A549 (cell line): ENCODE measurements at regions of chr15 and their contacts with region 1.

Region 1: GRCh38 chr15:40108855-40109735 is at the start of gene BMF:
- DNase-seq: peak; percentile 85 to 96
- ATAC-seq: peak; percentile 83 to 87
- H3K4me3 ChIP-seq: peak within 1 kb of the TSS; percentile 57
- H3K27ac ChIP-seq: peak within 1 kb of the TSS; percentile 59 to 82; a peak in 5 of 6 replicates
- H3K4me1 ChIP-seq: peaks cover 31% of the 10 kb centered on the region
- CTCF ChIP-seq: peak; percentile 40
- EP300 ChIP-seq: no peak
- POLR2A ChIP-seq: no peak
- RAD21 ChIP-seq: peak; percentile 17 to 36; a peak in 2 of 5 replicates
- polyA plus RNA-seq, gene BMF: 1.4 and 2.1 TPM in 2 replicates

Region 2: GRCh38 chr15:40044717-40045571 is 64.2 kb before region 1 on chr15:
- CTCF ChIA-PET with region 1: interaction called, 174 read pairs
- POLR2A ChIA-PET with region 1: interaction called, 5 read pairs
- DNase-seq: peak; percentile 78 to 84
- ATAC-seq: peak; percentile 94 to 98
- H3K4me3 ChIP-seq: peak overlapping the region; percentile 29
- H3K27ac ChIP-seq: peak overlapping the region; percentile 61 to 85
- H3K4me1 ChIP-seq: peaks cover 45% of the 10 kb centered on the region
- CTCF ChIP-seq: peak; percentile 83
- EP300 ChIP-seq: no peak
- POLR2A ChIP-seq: no peak
- RAD21 ChIP-seq: peak; percentile 93 to 97

Region 3: GRCh38 chr15:40064221-40064894 is 44.7 kb before region 1 on chr15:
- CTCF ChIA-PET with region 1: interaction called, 20 read pairs
- POLR2A ChIA-PET with region 1: no interaction called
- DNase-seq: peak in 1 of 2 experiments; percentile 73
- ATAC-seq: peak; percentile 47 to 53; a peak in 4 of 6 replicates
- H3K4me3 ChIP-seq: no peak overlapping the region
- H3K27ac ChIP-seq: peak overlapping the region; percentile 70 to 83
- H3K4me1 ChIP-seq: peaks cover 56% of the 10 kb centered on the region
- CTCF ChIP-seq: no peak
- EP300 ChIP-seq: peak; percentile 38 to 40; a peak in 2 of 5 replicates
- POLR2A ChIP-seq: no peak
- RAD21 ChIP-seq: no peak

Region 4: GRCh38 chr15:40081691-40082194 is 27.4 kb before region 1 on chr15:
- CTCF ChIA-PET with region 1: interaction called, 28 read pairs
- POLR2A ChIA-PET with region 1: no interaction called
- DNase-seq: peak in 1 of 2 experiments; percentile 32
- ATAC-seq: peak; percentile 83 to 91
- H3K4me3 ChIP-seq: no peak overlapping the region
- H3K27ac ChIP-seq: peak overlapping the region; percentile 50 to 77; a peak in 5 of 6 replicates
- H3K4me1 ChIP-seq: peaks cover 12% of the 10 kb centered on the region
- CTCF ChIP-seq: no peak
- EP300 ChIP-seq: no peak
- POLR2A ChIP-seq: no peak
- RAD21 ChIP-seq: no peak

Region 5: GRCh38 chr15:40098489-40099261 is 10.4 kb before region 1 on chr15:
- CTCF ChIA-PET with region 1: interaction called, 24 read pairs
- POLR2A ChIA-PET with region 1: interaction called, 4 read pairs
- DNase-seq: peak; percentile 83 to 90
- ATAC-seq: peak; percentile 97
- H3K4me3 ChIP-seq: no peak overlapping the region
- H3K27ac ChIP-seq: peak overlapping the region; percentile 68 to 81
- H3K4me1 ChIP-seq: peaks cover 52% of the 10 kb centered on the region
- CTCF ChIP-seq: no peak
- EP300 ChIP-seq: peak; percentile 37 to 43; a peak in 2 of 5 replicates
- POLR2A ChIP-seq: no peak
- RAD21 ChIP-seq: no peak; a peak in 2 of 5 replicates

Region 6: DNA sequence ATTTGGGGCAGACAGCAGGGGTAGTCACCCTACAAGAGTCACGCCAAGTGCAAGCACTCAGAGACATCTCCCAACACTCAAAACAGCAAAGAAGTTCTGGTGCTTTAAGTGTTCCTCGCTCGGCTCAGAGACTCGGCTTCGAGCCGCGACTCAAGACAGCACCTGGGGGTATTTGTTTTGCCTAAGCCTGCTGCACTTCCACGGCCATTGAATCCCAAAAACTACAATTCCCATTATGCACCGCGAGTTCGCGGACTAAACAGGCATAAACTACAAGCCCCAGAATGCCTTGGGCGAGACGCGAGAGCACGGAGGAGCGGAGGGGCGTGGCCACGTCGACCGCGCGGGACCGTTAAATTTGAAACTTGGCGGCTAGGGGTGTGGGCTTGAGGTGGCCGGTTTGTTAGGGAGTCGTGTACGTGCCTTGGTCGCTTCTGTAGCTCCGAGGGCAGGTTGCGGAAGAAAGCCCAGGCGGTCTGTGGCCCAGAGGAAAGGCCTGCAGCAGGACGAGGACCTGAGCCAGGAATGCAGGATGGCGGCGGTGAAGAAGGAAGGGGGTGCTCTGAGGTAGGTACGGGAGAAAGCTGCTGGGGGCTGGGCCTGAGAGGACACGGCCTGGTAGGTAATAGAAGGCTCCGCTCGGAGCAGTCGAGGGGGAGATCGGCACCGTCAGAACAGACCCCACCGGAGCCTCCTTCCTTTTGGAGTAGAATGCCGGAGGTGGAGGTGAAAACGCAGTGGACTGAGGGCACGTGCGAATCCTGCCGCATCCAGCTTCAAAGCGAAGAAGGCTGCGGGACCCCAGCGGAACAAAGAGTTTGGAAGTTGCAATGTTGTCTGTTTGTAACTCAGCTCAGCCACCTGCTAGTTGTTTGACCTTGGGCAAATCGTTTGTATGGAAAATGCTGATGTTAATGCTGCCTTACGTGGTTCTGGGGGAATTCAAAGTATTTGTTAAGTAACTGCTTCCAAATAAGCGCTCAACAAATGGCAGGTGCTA is 51.9 kb after region 1 on chr15 and contains the start of gene BUB1B:
- CTCF ChIA-PET with region 1: interaction called, 12 read pairs
- POLR2A ChIA-PET with region 1: no interaction called
- DNase-seq: peak; percentile 89 to 90
- ATAC-seq: peak; percentile 97
- H3K4me3 ChIP-seq: peak within 1 kb of the TSS; percentile 69
- H3K27ac ChIP-seq: peak within 1 kb of the TSS; percentile 70 to 92
- H3K4me1 ChIP-seq: peaks cover 11% of the 10 kb centered on the region
- CTCF ChIP-seq: no peak
- EP300 ChIP-seq: no peak
- POLR2A ChIP-seq: peak; percentile 19; the same call in 1 of the 2 replicates
- RAD21 ChIP-seq: no peak
- polyA plus RNA-seq, gene BUB1B: 37.5 and 42.2 TPM in 2 replicates